H1 (cell line): ENCODE measurements at regions of chr5 and their contacts with region 1.

Region 1: GRCh38 chr5:170278611-170279452 is 18.7 kb downstream of the LCP2 start:
- DNase-seq: no peak
- H3K4me3 ChIP-seq: no peak overlapping the region
- H3K27ac ChIP-seq: no peak overlapping the region; the same call in 1 of the 2 replicates
- H3K4me1 ChIP-seq: peaks cover 8 to 20% (median 18%) of the 10 kb centered on the region in 4 experiments
- H3K27me3 ChIP-seq: no peaks in the 10 kb centered on the region
- CTCF ChIP-seq: no peak
- EP300 ChIP-seq: no peak
- POLR2A ChIP-seq: no peak
- RAD21 ChIP-seq: no peak

Region 2: DNA sequence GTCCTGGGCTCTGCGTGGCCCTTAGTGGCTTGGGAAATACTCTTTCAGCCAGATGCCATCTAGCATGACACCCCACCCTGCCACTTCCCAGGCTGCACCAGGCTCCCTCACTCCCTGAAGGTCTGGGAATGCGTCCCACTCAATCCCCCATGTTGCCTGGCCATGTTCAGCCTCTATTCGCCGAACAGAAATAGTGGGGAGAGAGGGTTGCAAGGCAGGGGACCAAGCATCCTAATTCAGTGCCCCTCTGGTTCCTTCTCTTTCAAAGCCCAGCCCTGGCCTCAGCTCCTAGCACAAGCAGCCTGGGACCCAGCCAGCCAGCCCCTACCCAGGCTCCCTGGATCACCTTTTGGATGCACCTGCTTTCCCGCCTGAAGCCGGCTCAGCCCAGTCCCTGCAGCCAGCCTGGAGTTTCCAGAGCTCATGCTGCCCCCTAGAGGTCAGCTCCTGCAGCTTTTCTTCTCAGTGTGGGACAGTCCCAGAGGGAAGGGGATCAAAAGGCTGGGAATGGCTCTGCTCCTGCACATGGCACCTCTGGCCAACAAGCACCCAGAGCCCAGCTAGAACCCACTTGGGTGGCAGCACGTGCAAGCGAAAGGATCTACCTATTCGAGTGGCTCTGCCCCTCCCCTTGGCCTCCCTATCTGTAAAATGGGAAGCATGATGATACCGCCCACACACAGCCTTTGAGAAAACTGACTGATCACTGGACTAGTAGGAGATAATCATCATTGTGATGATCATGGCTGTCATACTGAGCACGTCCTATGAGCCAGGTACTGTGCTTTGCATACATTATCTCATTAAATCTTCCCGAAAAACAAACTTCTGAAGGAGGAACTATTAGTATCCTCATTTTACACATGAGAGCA is 94.8 kb before region 1 on chr5:
- CTCF ChIA-PET with region 1: no interaction called
- POLR2A ChIA-PET with region 1: no interaction called
- DNase-seq: peak; percentile 43 to 90
- H3K4me3 ChIP-seq: no peak overlapping the region
- H3K27ac ChIP-seq: no peak overlapping the region
- H3K4me1 ChIP-seq: no peaks in the 10 kb centered on the region
- H3K27me3 ChIP-seq: no peaks in the 10 kb centered on the region
- CTCF ChIP-seq: peak; percentile 82 to 96 (median 95)
- EP300 ChIP-seq: no peak; a peak in 1 of 3 replicates
- POLR2A ChIP-seq: no peak
- RAD21 ChIP-seq: peak; percentile 98 to 99

Region 3: GRCh38 chr5:170216266-170216864 is 62.5 kb before region 1 on chr5:
- CTCF ChIA-PET with region 1: no interaction called
- POLR2A ChIA-PET with region 1: no interaction called
- DNase-seq: no peak
- H3K4me3 ChIP-seq: no peak overlapping the region
- H3K27ac ChIP-seq: no peak overlapping the region
- H3K4me1 ChIP-seq: peaks cover 0 to 6% (median 1%) of the 10 kb centered on the region in 4 experiments; a peak in 2 of 7 replicates
- H3K27me3 ChIP-seq: peaks cover 0 to 19% (median 5%) of the 10 kb centered on the region in 4 experiments; a peak in 5 of 7 replicates
- CTCF ChIP-seq: peak; percentile 22 to 83 (median 76)
- EP300 ChIP-seq: no peak
- POLR2A ChIP-seq: no peak
- RAD21 ChIP-seq: peak; percentile 97

Region 4: GRCh38 chr5:170267431-170268152 is 11.2 kb before region 1 on chr5:
- CTCF ChIA-PET with region 1: interaction called, 32 read pairs
- POLR2A ChIA-PET with region 1: no interaction called
- DNase-seq: peak in 1 of 2 experiments; percentile 83
- H3K4me3 ChIP-seq: no peak overlapping the region
- H3K27ac ChIP-seq: no peak overlapping the region
- H3K4me1 ChIP-seq: peaks cover 6 to 11% (median 8%) of the 10 kb centered on the region in 4 experiments; a peak in 4 of 7 replicates
- H3K27me3 ChIP-seq: no peaks in the 10 kb centered on the region; a peak in 1 of 7 replicates
- CTCF ChIP-seq: peak; percentile 85 to 93 (median 89)
- EP300 ChIP-seq: no peak
- POLR2A ChIP-seq: no peak
- RAD21 ChIP-seq: peak; percentile 74 to 80

Region 5: DNA sequence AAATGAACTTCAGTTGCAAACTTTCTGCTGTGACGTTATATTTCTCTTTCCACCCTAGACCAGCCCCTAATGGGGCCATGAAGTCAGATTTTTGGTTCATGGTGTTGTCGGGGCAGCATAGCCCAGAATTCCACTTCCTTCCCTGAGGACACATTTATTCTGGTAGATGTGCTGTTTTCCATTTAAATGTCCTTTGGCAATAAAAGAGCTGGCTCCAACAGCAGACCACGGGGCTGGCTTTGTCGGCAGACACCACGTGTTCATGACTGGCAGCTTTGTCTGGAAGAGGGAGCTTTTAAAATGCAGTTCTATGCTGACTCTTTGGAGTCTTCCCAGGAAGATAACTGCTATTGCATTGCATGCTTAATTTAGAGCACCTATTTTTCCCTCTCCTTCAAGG is 36.3 kb after region 1 on chr5:
- CTCF ChIA-PET with region 1: interaction called, 12 read pairs
- POLR2A ChIA-PET with region 1: no interaction called
- DNase-seq: no peak
- H3K4me3 ChIP-seq: no peak overlapping the region
- H3K27ac ChIP-seq: no peak overlapping the region
- H3K4me1 ChIP-seq: peaks cover 0 to 6% (median 1%) of the 10 kb centered on the region in 4 experiments; a peak in 5 of 7 replicates
- H3K27me3 ChIP-seq: no peaks in the 10 kb centered on the region
- CTCF ChIP-seq: no peak
- EP300 ChIP-seq: no peak
- POLR2A ChIP-seq: no peak
- RAD21 ChIP-seq: no peak

Region 6: GRCh38 chr5:170348137-170348633 is 69.4 kb after region 1 on chr5:
- CTCF ChIA-PET with region 1: interaction called, 37 read pairs
- POLR2A ChIA-PET with region 1: no interaction called
- DNase-seq: no peak
- H3K4me3 ChIP-seq: no peak overlapping the region
- H3K27ac ChIP-seq: no peak overlapping the region
- H3K4me1 ChIP-seq: peaks cover 9 to 13% (median 10%) of the 10 kb centered on the region in 4 experiments; a peak in 6 of 7 replicates
- H3K27me3 ChIP-seq: peaks cover 0 to 4% (median 1%) of the 10 kb centered on the region in 4 experiments; a peak in 5 of 7 replicates
- CTCF ChIP-seq: peak in 2 of 3 experiments; percentile 27 to 28; a peak in 2 of 4 replicates
- EP300 ChIP-seq: no peak
- POLR2A ChIP-seq: no peak
- RAD21 ChIP-seq: peak; percentile 57 to 68

Region 7: GRCh38 chr5:170404402-170404801 is 125.6 kb after region 1 on chr5:
- CTCF ChIA-PET with region 1: interaction called, 20 read pairs
- POLR2A ChIA-PET with region 1: no interaction called
- DNase-seq: no peak
- H3K4me3 ChIP-seq: no peak overlapping the region
- H3K27ac ChIP-seq: no peak overlapping the region
- H3K4me1 ChIP-seq: peaks cover 9 to 15% (median 13%) of the 10 kb centered on the region in 4 experiments; a peak in 6 of 7 replicates
- H3K27me3 ChIP-seq: no peaks in the 10 kb centered on the region
- CTCF ChIP-seq: no peak
- EP300 ChIP-seq: no peak
- POLR2A ChIP-seq: no peak
- RAD21 ChIP-seq: no peak